ENCODE measurements at regions of chr9 and their contacts with region 1.

Region 1: DNA sequence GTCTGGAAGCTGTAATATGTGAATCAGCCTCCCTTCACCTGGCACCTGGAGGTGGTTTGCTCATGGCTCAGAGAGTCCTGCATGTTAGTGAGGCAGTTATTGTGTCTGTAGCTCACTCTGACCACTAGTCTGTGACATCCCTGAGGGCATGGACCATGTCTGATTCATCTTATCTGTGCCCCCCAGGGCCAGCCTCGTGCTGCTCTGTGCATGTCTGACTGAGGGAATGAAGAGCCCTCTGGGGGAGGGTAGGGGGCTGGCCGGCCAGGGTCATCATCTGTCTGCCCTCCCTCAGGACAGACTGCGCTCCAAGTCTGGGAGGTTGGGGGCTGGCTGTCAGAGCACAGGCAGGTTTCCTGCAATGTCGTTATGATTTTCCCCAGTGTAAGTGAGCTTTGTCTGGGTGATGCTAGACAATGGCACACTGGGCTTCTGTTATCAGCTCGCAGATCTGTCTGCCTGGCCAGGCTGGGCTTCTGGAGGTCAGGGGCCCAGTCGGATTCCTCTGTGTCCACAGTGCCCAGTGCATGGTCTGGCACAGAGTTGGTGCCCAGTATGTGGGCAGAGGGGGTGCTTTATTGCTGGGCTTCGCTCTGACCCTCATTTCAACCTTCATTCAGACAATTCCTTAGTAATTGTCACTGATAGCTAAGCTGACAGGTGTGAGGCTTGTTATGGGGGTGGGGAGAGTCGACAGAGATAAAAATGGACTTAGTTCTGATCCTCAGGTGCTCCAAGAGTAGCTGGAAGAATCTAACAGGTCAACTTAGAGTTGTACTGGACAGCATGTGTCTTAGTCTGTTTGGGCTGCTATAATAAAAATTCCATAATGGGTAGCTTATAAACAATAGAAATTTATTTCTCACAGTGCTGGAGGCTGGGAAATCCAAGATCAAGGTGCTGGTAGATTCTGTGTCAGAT is 85.7 kb upstream of the SHB start:
- DNase-seq: no peak
- H3K4me3 ChIP-seq: no peak overlapping the region
- H3K27ac ChIP-seq: no peak overlapping the region
- H3K4me1 ChIP-seq: no peaks in the 10 kb centered on the region
- H3K27me3 ChIP-seq: no peaks in the 10 kb centered on the region
- CTCF ChIP-seq: no peak
- POLR2A ChIP-seq: no peak

Region 2: GRCh38 chr9:37913480-37914153 is 241.1 kb before region 1 on chr9:
- intact Hi-C with region 1: loop called (anchors 5 kb)
- DNase-seq: peak; percentile 70 to 72
- H3K4me3 ChIP-seq: no peak overlapping the region
- H3K27ac ChIP-seq: no peak overlapping the region
- H3K4me1 ChIP-seq: peaks cover 16 to 17% of the 10 kb centered on the region in 2 donors
- H3K27me3 ChIP-seq: no peaks in the 10 kb centered on the region
- CTCF ChIP-seq: peak; percentile 93 to 99 (median 97)
- POLR2A ChIP-seq: no peak

Region 3: DNA sequence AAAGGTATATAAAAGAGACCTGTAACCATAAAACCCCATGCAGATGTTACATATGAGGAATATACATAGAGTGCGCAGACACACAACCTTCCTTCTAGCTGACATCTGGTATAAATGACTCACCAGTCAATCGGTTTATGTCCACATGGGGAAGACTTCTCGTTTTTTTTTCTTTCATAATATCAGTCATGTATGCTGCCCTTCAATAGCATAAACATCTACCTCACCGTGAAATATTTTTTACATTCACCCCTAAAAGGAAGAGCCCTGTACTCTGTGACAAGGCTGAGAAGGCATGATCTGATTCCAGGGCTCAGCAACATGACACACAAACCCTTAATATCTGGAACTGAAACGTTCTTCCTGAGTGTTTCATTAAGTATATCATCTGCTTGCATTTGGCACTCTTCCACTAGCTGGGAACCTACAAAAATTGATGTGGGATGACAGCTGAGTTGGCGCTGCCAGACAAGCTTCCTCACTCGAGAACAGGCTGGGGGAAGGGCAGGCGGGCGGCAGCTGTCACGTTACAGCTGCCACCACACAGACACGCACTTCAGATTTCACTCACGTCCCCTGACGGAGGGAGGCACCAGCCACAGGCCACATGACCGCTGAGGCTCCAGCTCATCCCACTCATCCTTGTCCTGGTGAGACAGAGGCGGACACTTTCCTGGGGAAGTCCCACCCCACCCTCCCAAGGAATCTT is 160.0 kb before region 1 on chr9:
- intact Hi-C with region 1: no loop called
- DNase-seq: peak; percentile 21 to 35
- H3K4me3 ChIP-seq: no peak overlapping the region
- H3K27ac ChIP-seq: no peak overlapping the region
- H3K4me1 ChIP-seq: peaks cover 0 to 20% of the 10 kb centered on the region in 2 donors
- H3K27me3 ChIP-seq: no peaks in the 10 kb centered on the region
- CTCF ChIP-seq: no peak
- POLR2A ChIP-seq: no peak

Region 4: GRCh38 chr9:38091310-38092199 is 63.2 kb before region 1 on chr9:
- intact Hi-C with region 1: no loop called
- DNase-seq: no peak
- H3K4me3 ChIP-seq: no peak overlapping the region
- H3K27ac ChIP-seq: no peak overlapping the region
- H3K4me1 ChIP-seq: no peaks in the 10 kb centered on the region
- H3K27me3 ChIP-seq: no peaks in the 10 kb centered on the region
- CTCF ChIP-seq: no peak
- POLR2A ChIP-seq: no peak